Naive thymus-derived CD4-positive, alpha-beta T cell (primary cell): ENCODE measurements at regions of chr1 and their contacts with region 1.

Region 1: DNA sequence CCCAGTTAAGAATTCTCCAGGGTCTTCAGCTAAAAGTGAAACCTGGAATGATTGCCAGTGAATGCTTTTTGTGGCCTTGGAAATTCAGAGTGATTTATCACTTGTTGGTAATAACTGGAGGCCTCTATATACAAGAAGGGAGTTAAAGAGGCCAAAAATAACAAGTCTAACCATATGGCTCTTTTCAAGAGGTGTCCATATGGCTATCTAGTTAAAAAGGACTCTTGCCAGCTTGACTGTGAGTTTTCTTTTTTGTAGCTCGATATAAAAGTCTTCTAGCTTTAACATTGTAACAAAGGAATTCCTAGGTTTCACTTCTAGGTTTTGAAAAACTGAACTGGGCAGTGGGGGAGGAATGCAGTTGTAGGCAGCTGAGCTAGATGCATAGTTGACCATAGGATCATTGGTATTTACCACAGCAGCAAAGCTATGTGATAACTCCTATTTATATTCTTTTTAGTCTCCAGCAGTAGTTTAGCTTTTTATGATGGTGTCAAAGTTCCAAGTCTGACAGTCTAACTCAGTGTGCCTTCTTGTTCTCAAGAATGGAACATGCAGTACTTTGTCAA is 44.4 kb downstream of the CACHD1 start:
- DNase-seq: no peak
- ATAC-seq: no peak
- H3K4me3 ChIP-seq: no peak overlapping the region
- H3K4me3 Mint-ChIP-seq: peak overlapping the region in 5 of 10 donors; percentile 6 to 23 (median 13)
- H3K27ac ChIP-seq: no peak overlapping the region
- H3K27ac Mint-ChIP-seq: peak overlapping the region in 3 of 9 donors; percentile 32 to 76 (median 59)
- H3K4me1 ChIP-seq: peaks cover 0 to 10% of the 10 kb centered on the region in 2 donors
- H3K4me1 Mint-ChIP-seq: peaks cover 0 to 70% (median 44%) of the 10 kb centered on the region in 7 donors
- H3K27me3 ChIP-seq: no peaks in the 10 kb centered on the region
- H3K27me3 Mint-ChIP-seq: peaks cover 0 to 11% (median 0%) of the 10 kb centered on the region in 5 donors

Region 2: GRCh38 chr1:64527165-64527564 is 12.9 kb after region 1 on chr1:
- CTCF ChIA-PET with region 1: interaction called, 3 read pairs
- POLR2A ChIA-PET with region 1: interaction called, 3 read pairs
- intact Hi-C with region 1: loop called in 1 of 2 experiments (anchors 1 kb)
- DNase-seq: peak in 6 of 9 donors; percentile 29 to 56 (median 36)
- ATAC-seq: peak; percentile 67
- H3K4me3 ChIP-seq: no peak overlapping the region
- H3K4me3 Mint-ChIP-seq: peak overlapping the region in 9 of 10 donors; percentile 3 to 78 (median 55)
- H3K27ac ChIP-seq: no peak overlapping the region
- H3K27ac Mint-ChIP-seq: peak overlapping the region in 6 of 9 donors; percentile 2 to 78 (median 22)
- H3K4me1 ChIP-seq: peaks cover 0 to 6% of the 10 kb centered on the region in 2 donors
- H3K4me1 Mint-ChIP-seq: peaks cover 0 to 81% (median 43%) of the 10 kb centered on the region in 7 donors
- H3K27me3 ChIP-seq: no peaks in the 10 kb centered on the region
- H3K27me3 Mint-ChIP-seq: peaks cover 0 to 7% (median 0%) of the 10 kb centered on the region in 5 donors